ENCODE measurements at regions of chr3 and their contacts with region 1.

Region 1: GRCh38 chr3:185733980-185734724 is 90.7 kb downstream of the IGF2BP2 start:
- DNase-seq: peak; percentile 73 to 85
- H3K4me3 ChIP-seq: no peak overlapping the region
- H3K27ac ChIP-seq: peak overlapping the region; percentile 23
- H3K4me1 ChIP-seq: peaks cover 65% of the 10 kb centered on the region
- H3K27me3 ChIP-seq: no peaks in the 10 kb centered on the region
- CTCF ChIP-seq: peak; percentile 90

Region 2: GRCh38 chr3:185661772-185662171 is 72.4 kb before region 1 on chr3:
- CTCF ChIA-PET with region 1: no interaction called
- POLR2A ChIA-PET with region 1: no interaction called
- intact Hi-C with region 1: no loop called
- DNase-seq: no peak
- H3K4me3 ChIP-seq: no peak overlapping the region
- H3K27ac ChIP-seq: no peak overlapping the region
- H3K4me1 ChIP-seq: peaks cover 17% of the 10 kb centered on the region
- H3K27me3 ChIP-seq: no peaks in the 10 kb centered on the region
- CTCF ChIP-seq: no peak

Region 3: DNA sequence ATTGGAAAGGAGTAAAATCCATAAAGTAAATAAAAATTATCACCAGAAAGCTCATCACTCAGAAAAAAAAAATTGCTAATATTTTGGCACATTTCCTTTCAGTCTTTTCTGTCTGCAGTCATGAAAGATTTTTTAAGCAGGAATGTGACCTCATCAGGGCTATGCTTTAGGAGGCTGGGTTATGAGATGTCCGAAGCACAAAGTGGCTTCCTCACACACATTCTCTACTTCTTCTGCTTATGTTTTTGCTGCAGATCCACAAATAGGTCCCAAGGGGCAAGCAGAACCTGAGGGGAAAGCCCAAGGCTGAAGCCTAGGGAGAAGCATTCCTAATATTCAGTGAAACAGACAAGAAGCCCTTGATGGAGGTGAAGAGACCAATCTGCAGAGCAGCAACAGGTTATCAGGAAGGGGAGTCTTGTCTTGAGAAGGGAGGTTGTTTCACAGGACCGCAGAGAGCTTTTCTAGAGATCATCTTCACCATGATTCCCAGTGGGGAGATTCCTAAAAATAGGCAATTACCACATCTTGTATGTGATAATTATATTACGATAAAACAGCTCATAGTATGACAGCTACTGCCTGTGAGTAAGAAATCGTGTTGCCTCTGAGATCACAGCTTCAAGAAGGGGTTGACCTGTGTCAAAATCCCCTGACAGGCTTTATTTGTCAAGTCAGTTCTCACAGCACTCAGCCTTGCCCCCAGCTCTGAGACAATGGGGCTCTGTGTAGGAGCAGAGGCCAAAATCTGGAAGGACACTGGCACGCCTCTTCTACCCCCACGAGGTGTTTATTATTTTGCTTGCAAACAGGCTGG is 30.2 kb after region 1 on chr3:
- CTCF ChIA-PET with region 1: interaction called, 7 read pairs
- POLR2A ChIA-PET with region 1: no interaction called
- intact Hi-C with region 1: loop called (anchors 5 kb)
- DNase-seq: no peak
- H3K4me3 ChIP-seq: no peak overlapping the region
- H3K27ac ChIP-seq: no peak overlapping the region
- H3K4me1 ChIP-seq: peaks cover 22% of the 10 kb centered on the region
- H3K27me3 ChIP-seq: no peaks in the 10 kb centered on the region
- CTCF ChIP-seq: no peak

Region 4: GRCh38 chr3:185912929-185913901 is 179.1 kb after region 1 on chr3:
- CTCF ChIA-PET with region 1: no interaction called
- POLR2A ChIA-PET with region 1: no interaction called
- intact Hi-C with region 1: loop called (anchors 2 kb)
- DNase-seq: no peak
- H3K4me3 ChIP-seq: no peak overlapping the region
- H3K27ac ChIP-seq: 0 out of 2 replicates have a peak overlapping the region, but pooled peaks have one; percentile 15
- H3K4me1 ChIP-seq: no peaks in the 10 kb centered on the region
- H3K27me3 ChIP-seq: no peaks in the 10 kb centered on the region
- CTCF ChIP-seq: no peak

Region 5: GRCh38 chr3:185942907-185943759 is 209.0 kb after region 1 on chr3:
- CTCF ChIA-PET with region 1: interaction called, 5 read pairs
- POLR2A ChIA-PET with region 1: no interaction called
- intact Hi-C with region 1: loop called (anchors 5 kb)
- DNase-seq: peak; percentile 86 to 93
- H3K4me3 ChIP-seq: no peak overlapping the region; the same call in 1 of the 2 replicates
- H3K27ac ChIP-seq: no peak overlapping the region
- H3K4me1 ChIP-seq: peaks cover 48% of the 10 kb centered on the region
- H3K27me3 ChIP-seq: no peaks in the 10 kb centered on the region
- CTCF ChIP-seq: peak; percentile 100

Region 6: GRCh38 chr3:186241910-186242821 is 508.0 kb after region 1 on chr3:
- CTCF ChIA-PET with region 1: no interaction called
- POLR2A ChIA-PET with region 1: no interaction called
- intact Hi-C with region 1: loop called (anchors 5 kb)
- DNase-seq: peak; percentile 86 to 89
- H3K4me3 ChIP-seq: peak overlapping the region; percentile 61
- H3K27ac ChIP-seq: peak overlapping the region; percentile 70
- H3K4me1 ChIP-seq: peaks cover 18% of the 10 kb centered on the region
- H3K27me3 ChIP-seq: no peaks in the 10 kb centered on the region
- CTCF ChIP-seq: peak; percentile 81